Activated naive CD4-positive, alpha-beta T cell treated with anti-CD3 and anti-CD28 coated beads for 36 hours (primary cell): ENCODE measurements at regions of chr5 and their contacts with region 1.

Region 1: GRCh38 chr5:159444441-159445082 is 114.3 kb upstream of the IL12B start:
- DNase-seq: no peak
- H3K4me3 Mint-ChIP-seq: no peak overlapping the region
- H3K27ac Mint-ChIP-seq: no peak overlapping the region
- H3K4me1 Mint-ChIP-seq: no peaks in the 10 kb centered on the region
- H3K27me3 Mint-ChIP-seq: peaks cover 6% of the 10 kb centered on the region

Region 2: DNA sequence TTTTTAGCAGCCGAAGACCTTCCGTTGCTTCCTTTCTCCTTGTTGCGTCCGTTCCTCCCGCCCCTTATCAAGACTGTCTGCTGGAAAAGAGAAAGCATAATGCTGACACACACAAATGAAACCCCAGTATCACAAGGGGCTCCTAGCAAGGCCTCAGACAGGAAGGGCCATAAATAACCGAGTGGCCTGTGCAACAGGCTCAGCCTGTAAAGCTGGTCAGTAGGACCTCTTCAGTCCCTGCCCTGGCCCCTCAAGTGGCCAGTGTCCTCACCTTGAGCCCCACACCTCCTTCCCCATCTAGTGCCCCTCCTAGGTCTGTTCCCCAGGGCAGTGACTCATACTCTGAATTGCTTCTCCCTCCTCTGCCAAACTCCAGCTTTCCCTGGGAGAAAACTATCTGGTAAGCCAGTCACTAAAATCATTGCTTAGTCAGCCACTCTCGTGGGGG is 60.3 kb after region 1 on chr5:
- CTCF ChIA-PET with region 1: no interaction called
- intact Hi-C with region 1: no loop called
- DNase-seq: no peak
- H3K4me3 Mint-ChIP-seq: no peak overlapping the region
- H3K27ac Mint-ChIP-seq: no peak overlapping the region
- H3K4me1 Mint-ChIP-seq: peaks cover 2% of the 10 kb centered on the region
- H3K27me3 Mint-ChIP-seq: no peaks in the 10 kb centered on the region

Region 3: GRCh38 chr5:159915904-159916840 is 471.6 kb after region 1 on chr5 and contains the start of gene ADRA1B:
- CTCF ChIA-PET with region 1: interaction called, 4 read pairs
- intact Hi-C with region 1: loop called (anchors 1 kb)
- DNase-seq: peak; percentile 66
- H3K4me3 Mint-ChIP-seq: peak within 1 kb of the TSS; percentile 36
- H3K27ac Mint-ChIP-seq: no peak within 1 kb of the TSS
- H3K4me1 Mint-ChIP-seq: peaks cover 6% of the 10 kb centered on the region
- H3K27me3 Mint-ChIP-seq: peaks cover 44% of the 10 kb centered on the region
- total RNA-seq, gene ADRA1B: not detected

Region 4: GRCh38 chr5:159965031-159965837 is 520.7 kb after region 1 on chr5:
- CTCF ChIA-PET with region 1: no interaction called
- intact Hi-C with region 1: loop called (anchors 1 kb)
- DNase-seq: peak; percentile 55
- H3K4me3 Mint-ChIP-seq: no peak overlapping the region
- H3K27ac Mint-ChIP-seq: no peak overlapping the region
- H3K4me1 Mint-ChIP-seq: no peaks in the 10 kb centered on the region
- H3K27me3 Mint-ChIP-seq: peaks cover 28% of the 10 kb centered on the region

Region 5: GRCh38 chr5:159975462-159976019 is 531.0 kb after region 1 on chr5:
- CTCF ChIA-PET with region 1: no interaction called
- intact Hi-C with region 1: loop called (anchors 1 kb)
- DNase-seq: no peak
- H3K4me3 Mint-ChIP-seq: no peak overlapping the region
- H3K27ac Mint-ChIP-seq: no peak overlapping the region
- H3K4me1 Mint-ChIP-seq: peaks cover 10% of the 10 kb centered on the region
- H3K27me3 Mint-ChIP-seq: peaks cover 53% of the 10 kb centered on the region

Region 6: DNA sequence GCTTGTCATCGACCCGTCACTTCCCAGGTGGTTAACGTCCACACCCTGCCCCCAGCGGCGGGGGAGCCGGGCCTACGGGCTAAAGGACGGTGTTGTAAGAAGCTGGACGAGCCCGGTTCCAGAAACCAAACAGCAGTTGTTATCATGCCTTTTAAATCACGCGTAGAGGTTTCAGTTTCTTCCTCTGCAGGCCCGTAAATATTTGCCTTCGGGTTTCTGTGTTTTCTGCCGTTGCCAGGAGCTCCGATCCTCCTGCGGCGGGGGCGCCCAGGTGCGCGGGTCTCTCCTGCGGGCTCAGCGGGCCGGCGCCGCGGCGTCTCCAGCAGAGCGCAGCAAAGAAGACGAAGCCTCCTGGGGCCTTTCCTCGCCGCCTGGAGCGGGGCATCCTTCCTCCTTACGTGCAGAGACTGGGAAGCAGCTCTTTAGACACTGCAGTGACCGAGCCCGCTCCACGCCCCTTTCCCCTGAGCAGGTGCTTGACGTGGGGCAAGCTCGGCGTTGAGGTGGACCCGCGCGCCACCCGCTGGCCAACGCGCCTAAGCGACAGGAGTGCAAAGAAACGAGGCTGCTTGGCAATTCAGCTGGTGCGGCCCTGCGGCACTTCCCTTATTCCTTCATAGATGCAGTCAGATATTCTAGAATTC is 542.6 kb after region 1 on chr5:
- CTCF ChIA-PET with region 1: interaction called, 10 read pairs
- intact Hi-C with region 1: loop called (anchors 1 kb)
- DNase-seq: peak; percentile 83
- H3K4me3 Mint-ChIP-seq: peak overlapping the region; percentile 56
- H3K27ac Mint-ChIP-seq: no peak overlapping the region
- H3K4me1 Mint-ChIP-seq: no peaks in the 10 kb centered on the region
- H3K27me3 Mint-ChIP-seq: peaks cover 20% of the 10 kb centered on the region